B cell (primary cell): ENCODE measurements at regions of chr14 and their contacts with region 1.

Region 1: DNA sequence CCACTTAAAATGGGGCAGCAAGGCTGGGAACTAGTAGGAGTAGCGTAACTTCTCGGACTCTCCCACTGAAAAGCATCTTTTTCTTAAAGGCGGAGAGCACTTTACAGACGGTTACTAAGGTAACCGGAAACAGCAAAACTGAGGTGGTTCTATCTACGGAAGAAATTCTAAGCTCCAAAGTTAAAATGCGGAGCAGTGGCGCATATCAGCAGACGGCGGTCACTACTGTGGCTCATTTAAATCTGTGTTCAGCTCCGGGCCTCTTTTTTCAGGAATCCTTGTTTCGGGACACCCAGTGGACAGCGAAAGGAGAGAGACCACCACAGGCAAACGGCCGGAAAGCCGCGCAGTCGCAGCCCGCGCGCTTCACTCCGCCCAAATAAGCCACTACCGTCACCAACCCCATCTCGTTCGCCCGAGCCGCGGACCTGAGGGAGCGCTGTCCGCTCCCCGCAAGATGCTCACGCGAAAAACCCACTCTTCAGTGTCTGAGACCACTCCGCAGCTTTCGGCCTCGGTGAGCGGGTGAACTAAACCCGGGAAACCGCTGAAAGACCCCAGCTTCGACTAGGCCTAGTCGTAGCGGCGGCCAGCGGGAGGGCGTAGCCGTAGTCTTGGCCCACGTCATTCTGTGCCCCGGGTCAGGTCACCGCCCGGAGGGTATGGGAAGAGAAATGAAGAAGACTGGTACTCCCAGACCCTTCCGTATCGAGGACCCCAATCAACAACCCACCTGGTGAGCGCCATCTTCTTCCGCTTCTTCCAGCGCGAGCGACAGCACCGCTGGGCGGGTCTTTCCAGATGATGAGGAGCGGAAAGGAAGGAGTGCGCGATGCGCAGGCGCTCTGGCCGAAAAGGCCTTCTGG is at the start of gene SNW1:
- DNase-seq: peak; percentile 95
- ATAC-seq: peak; percentile 94
- H3K4me3 ChIP-seq: peak within 1 kb of the TSS; percentile 82 to 98 (median 92)
- H3K4me3 Mint-ChIP-seq: peak within 1 kb of the TSS; percentile 97
- H3K27ac ChIP-seq: peak within 1 kb of the TSS; percentile 97
- H3K27ac Mint-ChIP-seq: peak within 1 kb of the TSS; percentile 97
- H3K4me1 ChIP-seq: peaks cover 23 to 24% of the 10 kb centered on the region in 2 donors
- H3K4me1 Mint-ChIP-seq: peaks cover 36% of the 10 kb centered on the region
- H3K27me3 ChIP-seq: no peaks in the 10 kb centered on the region
- H3K27me3 Mint-ChIP-seq: no peaks in the 10 kb centered on the region
- CTCF ChIP-seq: no peak
- total RNA-seq, gene SNW1: 86.4 and 99.3 TPM in 2 replicates

Region 2: DNA sequence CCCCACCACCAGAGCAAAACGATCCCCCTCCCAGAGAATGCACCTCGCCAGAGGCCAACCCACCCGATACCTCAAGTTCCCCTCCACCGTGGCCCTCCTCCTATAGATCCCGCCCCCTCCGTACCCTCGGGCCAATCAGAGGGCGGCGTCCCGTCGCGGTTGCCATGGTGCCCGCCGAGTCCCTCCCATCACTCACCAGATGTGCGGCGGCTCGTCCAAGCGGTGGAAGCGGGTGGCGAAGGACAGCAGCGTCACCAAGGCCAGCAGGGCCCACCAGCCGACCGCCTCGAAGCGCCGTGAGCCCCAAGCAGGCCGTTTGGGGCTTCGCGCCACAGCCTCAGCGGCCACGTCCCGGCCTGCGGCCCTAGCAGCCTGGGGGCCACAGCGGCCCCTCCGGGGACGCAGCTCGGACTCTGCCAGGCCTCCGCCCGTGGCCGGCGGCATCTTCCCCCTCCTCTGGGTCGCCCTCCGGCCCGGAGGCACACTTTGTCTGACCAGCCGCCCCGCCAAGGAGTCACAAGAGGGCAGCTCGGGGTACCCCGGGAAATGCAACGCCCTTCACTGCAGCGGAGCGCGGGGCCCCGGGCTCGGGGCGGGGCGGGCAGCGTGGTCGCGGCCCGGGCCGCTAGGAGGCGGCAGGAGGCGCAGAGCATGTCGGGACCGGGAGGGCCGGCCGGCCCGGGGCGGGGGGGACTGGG is 440.2 kb before region 1 on chr14 and contains the start of gene POMT2:
- CTCF ChIA-PET with region 1: interaction called, 3 read pairs
- POLR2A ChIA-PET with region 1: interaction called, 5 read pairs
- intact Hi-C with region 1: loop called (anchors 1 kb)
- DNase-seq: peak; percentile 96
- ATAC-seq: peak; percentile 56
- H3K4me3 ChIP-seq: peak within 1 kb of the TSS; percentile 59 to 99 (median 93)
- H3K4me3 Mint-ChIP-seq: peak within 1 kb of the TSS; percentile 100
- H3K27ac ChIP-seq: peak within 1 kb of the TSS; percentile 89 to 92
- H3K27ac Mint-ChIP-seq: peak within 1 kb of the TSS; percentile 100
- H3K4me1 ChIP-seq: peaks cover 10 to 16% of the 10 kb centered on the region in 2 donors
- H3K4me1 Mint-ChIP-seq: peaks cover 18% of the 10 kb centered on the region
- H3K27me3 ChIP-seq: no peaks in the 10 kb centered on the region
- H3K27me3 Mint-ChIP-seq: no peaks in the 10 kb centered on the region
- CTCF ChIP-seq: peak; percentile 43
- total RNA-seq, gene POMT2: 36.6 and 44.1 TPM in 2 replicates

Region 3: DNA sequence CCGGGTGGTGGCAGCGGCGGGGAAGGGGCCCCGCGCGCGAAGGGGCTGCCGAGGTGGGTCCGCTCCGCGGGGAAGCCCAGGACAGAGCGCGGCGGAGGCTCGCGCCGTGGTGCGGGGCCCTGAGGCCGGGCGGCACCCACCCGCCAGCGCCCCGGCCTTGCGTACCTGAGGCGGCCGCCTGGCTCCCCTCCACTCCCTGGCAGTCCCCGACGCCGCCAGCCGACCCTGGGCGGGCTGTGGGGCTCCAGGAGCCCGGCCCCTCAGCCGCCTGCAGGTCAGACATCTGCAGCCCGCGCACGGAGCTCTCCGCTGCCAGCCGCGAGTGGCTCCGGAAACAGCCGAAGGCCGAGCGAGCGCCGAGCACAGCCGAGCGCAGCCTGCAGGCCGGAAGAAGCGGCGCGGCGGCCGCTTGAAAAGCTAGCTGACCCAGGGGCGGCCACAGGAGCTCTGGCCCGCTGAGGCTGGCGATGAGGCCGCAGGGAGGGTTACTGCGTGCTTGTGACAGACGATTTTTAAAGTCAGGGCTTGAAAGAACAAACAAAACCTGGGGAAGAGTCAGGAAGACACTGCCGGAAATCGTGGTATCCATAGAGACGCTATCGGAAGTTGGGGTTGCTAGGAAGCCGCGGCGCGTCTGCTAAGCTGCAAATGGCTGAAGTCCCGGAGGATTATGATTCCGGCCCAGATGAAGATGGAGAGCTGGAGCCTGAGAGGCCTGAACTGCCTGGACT is 383.7 kb before region 1 on chr14 and contains the starts of genes SAMD15 and TMED8:
- CTCF ChIA-PET with region 1: no interaction called
- POLR2A ChIA-PET with region 1: no interaction called
- intact Hi-C with region 1: loop called (anchors 10 kb)
- DNase-seq: peak; percentile 92
- ATAC-seq: peak; percentile 92
- H3K4me3 ChIP-seq: peak within 1 kb of the TSS; percentile 79 to 100 (median 93)
- H3K4me3 Mint-ChIP-seq: peak within 1 kb of the TSS; percentile 95
- H3K27ac ChIP-seq: peak within 1 kb of the TSS; percentile 18 to 85
- H3K27ac Mint-ChIP-seq: peak within 1 kb of the TSS; percentile 91
- H3K4me1 ChIP-seq: peaks cover 39 to 43% of the 10 kb centered on the region in 2 donors
- H3K4me1 Mint-ChIP-seq: peaks cover 40% of the 10 kb centered on the region
- H3K27me3 ChIP-seq: no peaks in the 10 kb centered on the region
- H3K27me3 Mint-ChIP-seq: no peaks in the 10 kb centered on the region
- CTCF ChIP-seq: peak; percentile 48
- total RNA-seq, gene SAMD15: 0.96 and 1.00 TPM in 2 replicates
- total RNA-seq, gene TMED8: 43.8 and 44.7 TPM in 2 replicates

Region 4: DNA sequence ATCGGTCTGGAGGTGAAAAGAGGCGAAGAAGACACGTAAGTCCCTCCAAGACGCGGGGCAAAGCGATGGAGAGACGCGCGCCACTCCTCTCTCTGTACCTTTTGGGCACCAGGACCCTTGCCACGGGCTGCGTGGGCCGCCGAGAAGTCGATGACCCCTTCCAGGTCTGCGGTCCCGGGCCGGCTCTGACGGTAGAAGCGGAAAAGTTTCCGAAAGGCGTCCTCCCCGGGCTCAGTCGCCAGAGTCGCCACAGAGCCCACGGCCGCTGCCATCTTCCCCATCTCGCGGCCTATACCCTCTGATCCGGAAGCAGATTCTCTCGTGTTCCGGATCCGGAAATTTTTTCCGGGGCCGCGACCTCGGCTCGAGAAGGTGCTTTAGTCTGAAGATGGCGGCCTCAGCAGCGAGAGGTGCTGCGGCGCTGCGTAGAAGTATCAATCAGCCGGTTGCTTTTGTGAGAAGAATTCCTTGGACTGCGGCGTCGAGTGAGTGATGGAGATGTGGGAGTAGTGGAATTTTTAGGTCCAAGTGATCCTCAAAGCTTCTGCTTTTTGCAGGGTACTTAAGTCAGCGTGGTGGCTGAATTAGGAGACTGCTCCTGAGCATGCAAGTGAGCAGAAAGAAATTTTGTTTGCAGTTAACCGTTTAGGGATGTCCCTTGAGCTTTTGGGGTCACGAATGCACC is 52.7 kb before region 1 on chr14 and contains the starts of genes ALKBH1 and SLIRP:
- CTCF ChIA-PET with region 1: interaction called, 4 read pairs
- POLR2A ChIA-PET with region 1: no interaction called
- intact Hi-C with region 1: loop called (anchors 1 kb)
- DNase-seq: peak; percentile 91
- ATAC-seq: peak; percentile 97
- H3K4me3 ChIP-seq: peak within 1 kb of the TSS; percentile 82 to 98 (median 92)
- H3K4me3 Mint-ChIP-seq: peak within 1 kb of the TSS; percentile 94
- H3K27ac ChIP-seq: peak within 1 kb of the TSS in 1 of 2 donors; percentile 75
- H3K27ac Mint-ChIP-seq: peak within 1 kb of the TSS; percentile 91
- H3K4me1 ChIP-seq: peaks cover 22 to 32% of the 10 kb centered on the region in 2 donors
- H3K4me1 Mint-ChIP-seq: peaks cover 37% of the 10 kb centered on the region
- H3K27me3 ChIP-seq: no peaks in the 10 kb centered on the region
- H3K27me3 Mint-ChIP-seq: no peaks in the 10 kb centered on the region
- CTCF ChIP-seq: no peak
- total RNA-seq, gene ALKBH1: 19.0 and 21.8 TPM in 2 replicates
- total RNA-seq, gene SLIRP: 30.6 and 33.8 TPM in 2 replicates

Region 5: DNA sequence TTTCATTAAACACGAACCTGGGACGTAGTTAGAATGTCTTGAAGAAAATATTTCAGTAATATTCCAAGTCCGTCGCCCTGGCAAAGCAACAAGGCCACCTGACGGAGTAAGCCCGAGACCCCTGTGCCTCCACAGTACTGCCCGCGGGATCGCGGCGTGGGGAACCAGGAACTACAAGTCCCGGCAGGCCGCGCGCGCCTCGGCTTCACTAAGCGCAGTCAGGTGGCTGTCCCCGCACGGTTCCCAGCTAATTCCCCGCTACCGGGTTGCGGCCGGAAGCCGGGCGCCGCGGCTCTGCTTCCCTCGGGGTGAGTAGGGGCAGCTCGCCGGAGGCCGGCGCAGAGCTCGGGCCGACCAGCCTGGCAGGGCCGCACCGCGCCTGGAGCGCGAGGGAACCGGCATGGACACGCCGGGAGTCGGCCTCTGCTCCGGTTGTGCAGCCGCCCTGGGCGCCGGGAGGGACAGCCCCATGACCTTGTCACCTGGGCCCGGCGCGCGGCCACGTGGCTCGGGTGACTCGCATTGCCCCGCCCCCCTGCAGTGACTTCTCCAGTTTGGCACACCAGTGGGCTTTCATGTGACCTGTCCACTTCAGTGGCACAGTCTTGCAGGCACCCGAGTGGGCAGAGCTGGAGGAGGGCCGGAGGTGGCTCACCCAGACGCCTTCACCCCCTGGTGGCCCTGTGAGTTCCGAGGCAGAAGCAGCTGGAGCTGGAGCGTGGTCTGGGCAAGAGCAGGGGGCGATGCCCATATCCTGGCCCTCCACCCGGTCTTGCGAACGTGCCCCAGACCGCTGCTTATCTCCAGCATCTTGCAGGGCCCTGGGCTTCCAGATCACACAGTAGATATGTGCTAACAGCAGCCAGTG is 39.5 kb after region 1 on chr14 and contains the start of gene ADCK1:
- CTCF ChIA-PET with region 1: interaction called, 5 read pairs
- POLR2A ChIA-PET with region 1: interaction called, 4 read pairs
- intact Hi-C with region 1: loop called (anchors 1 kb)
- DNase-seq: peak; percentile 90
- ATAC-seq: peak; percentile 90
- H3K4me3 ChIP-seq: peak within 1 kb of the TSS; percentile 47 to 91 (median 71)
- H3K4me3 Mint-ChIP-seq: peak within 1 kb of the TSS; percentile 92
- H3K27ac ChIP-seq: peak within 1 kb of the TSS; percentile 40 to 87
- H3K27ac Mint-ChIP-seq: peak within 1 kb of the TSS; percentile 89
- H3K4me1 ChIP-seq: peaks cover 4 to 8% of the 10 kb centered on the region in 2 donors
- H3K4me1 Mint-ChIP-seq: peaks cover 12% of the 10 kb centered on the region
- H3K27me3 ChIP-seq: no peaks in the 10 kb centered on the region
- H3K27me3 Mint-ChIP-seq: no peaks in the 10 kb centered on the region
- CTCF ChIP-seq: peak; percentile 14
- total RNA-seq, gene ADCK1: 10.6 and 13.1 TPM in 2 replicates